ENCODE measurements at regions of chr7 and their contacts with region 1.

Region 1: GRCh38 chr7:54839538-54840213 is 80.7 kb upstream of the SEC61G start:
- DNase-seq: peak; percentile 78
- ATAC-seq: peak; percentile 74
- H3K4me3 ChIP-seq: no peak overlapping the region
- H3K27ac ChIP-seq: peak overlapping the region; percentile 96
- H3K4me1 ChIP-seq: peaks cover 69% of the 10 kb centered on the region
- H3K27me3 ChIP-seq: no peaks in the 10 kb centered on the region
- CTCF ChIP-seq: peak; percentile 90

Region 2: GRCh38 chr7:54825368-54825767 is 14.3 kb before region 1 on chr7:
- CTCF ChIA-PET with region 1: no interaction called
- POLR2A ChIA-PET with region 1: no interaction called
- intact Hi-C with region 1: loop called (anchors 1 kb)
- DNase-seq: no peak
- ATAC-seq: peak; percentile 54
- H3K4me3 ChIP-seq: peak overlapping the region; percentile 45; the same call in 1 of the 2 replicates
- H3K27ac ChIP-seq: peak overlapping the region; percentile 83
- H3K4me1 ChIP-seq: peaks cover 41% of the 10 kb centered on the region
- H3K27me3 ChIP-seq: no peaks in the 10 kb centered on the region
- CTCF ChIP-seq: no peak; the same call in 1 of the 2 replicates

Region 3: GRCh38 chr7:54858008-54858692 is 18.5 kb after region 1 on chr7:
- CTCF ChIA-PET with region 1: no interaction called
- POLR2A ChIA-PET with region 1: no interaction called
- intact Hi-C with region 1: no loop called
- DNase-seq: no peak
- ATAC-seq: no peak
- H3K4me3 ChIP-seq: no peak overlapping the region
- H3K27ac ChIP-seq: no peak overlapping the region
- H3K4me1 ChIP-seq: no peaks in the 10 kb centered on the region
- H3K27me3 ChIP-seq: no peaks in the 10 kb centered on the region
- CTCF ChIP-seq: no peak

Region 4: DNA sequence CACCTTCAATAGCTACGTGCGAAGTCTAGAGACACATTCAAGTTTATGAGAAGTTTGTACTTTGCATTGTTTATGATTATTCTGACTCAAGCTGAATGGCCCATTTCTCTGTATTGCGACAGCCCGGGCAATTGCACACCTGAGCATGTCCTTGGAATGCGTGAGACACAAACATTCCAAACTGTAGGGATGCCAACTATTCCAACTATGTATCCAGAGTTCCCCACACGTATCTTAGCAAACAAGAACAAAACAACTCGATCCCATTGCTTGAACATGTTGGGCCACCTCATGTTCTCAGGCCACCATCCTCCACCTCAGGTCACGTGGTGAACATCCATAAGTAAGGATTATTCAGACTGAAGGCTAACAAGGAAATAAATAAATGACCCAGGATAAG is 127.7 kb after region 1 on chr7:
- CTCF ChIA-PET with region 1: no interaction called
- POLR2A ChIA-PET with region 1: interaction called, 4 read pairs
- intact Hi-C with region 1: loop called (anchors 5 kb)
- DNase-seq: peak; percentile 98
- ATAC-seq: peak; percentile 72
- H3K4me3 ChIP-seq: no peak overlapping the region
- H3K27ac ChIP-seq: peak overlapping the region; percentile 84
- H3K4me1 ChIP-seq: peaks cover 55% of the 10 kb centered on the region
- H3K27me3 ChIP-seq: no peaks in the 10 kb centered on the region
- CTCF ChIP-seq: no peak

Region 5: DNA sequence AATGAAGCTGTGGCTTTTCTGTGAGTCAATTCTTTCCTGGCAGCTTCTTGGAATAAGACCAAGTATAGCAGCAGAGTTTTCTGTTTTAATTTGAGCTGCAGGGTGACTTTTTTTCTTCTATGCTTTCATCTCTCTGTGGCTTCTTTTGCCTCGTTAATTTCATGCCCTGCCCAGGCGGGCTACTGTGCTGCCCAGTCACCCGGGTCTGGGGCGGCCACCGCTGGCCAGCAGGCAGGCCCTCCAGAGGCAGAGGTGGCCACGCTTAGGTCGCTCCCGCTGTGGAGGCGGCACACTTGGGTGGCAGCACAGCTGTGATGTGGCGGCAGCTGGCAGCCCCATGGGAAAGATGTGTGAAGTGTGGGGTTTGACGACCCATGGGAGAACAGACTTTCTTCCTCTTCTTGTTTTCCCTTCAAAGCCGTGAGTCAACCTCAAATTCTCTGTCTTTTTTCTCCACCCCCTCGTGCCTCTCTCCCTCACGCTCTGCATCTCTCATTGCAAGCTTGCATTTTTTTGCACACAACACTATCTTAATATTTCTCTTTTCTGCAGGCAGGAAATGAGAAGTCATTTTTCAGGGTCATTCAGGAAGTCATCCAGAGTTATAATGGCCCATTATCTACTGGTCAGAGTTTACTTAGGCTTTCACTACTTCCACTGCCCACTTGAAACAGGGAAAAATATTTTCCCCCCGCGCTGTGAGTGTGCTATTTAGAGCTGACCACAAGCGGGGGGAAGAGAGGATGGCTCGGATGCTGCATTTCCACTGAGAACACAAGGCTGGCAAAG is 246.9 kb after region 1 on chr7:
- CTCF ChIA-PET with region 1: no interaction called
- POLR2A ChIA-PET with region 1: no interaction called
- intact Hi-C with region 1: loop called (anchors 5 kb)
- DNase-seq: peak; percentile 78
- ATAC-seq: peak; percentile 84
- H3K4me3 ChIP-seq: peak overlapping the region; percentile 63
- H3K27ac ChIP-seq: peak overlapping the region; percentile 99
- H3K4me1 ChIP-seq: peaks cover 44% of the 10 kb centered on the region
- H3K27me3 ChIP-seq: no peaks in the 10 kb centered on the region
- CTCF ChIP-seq: no peak

Region 6: DNA sequence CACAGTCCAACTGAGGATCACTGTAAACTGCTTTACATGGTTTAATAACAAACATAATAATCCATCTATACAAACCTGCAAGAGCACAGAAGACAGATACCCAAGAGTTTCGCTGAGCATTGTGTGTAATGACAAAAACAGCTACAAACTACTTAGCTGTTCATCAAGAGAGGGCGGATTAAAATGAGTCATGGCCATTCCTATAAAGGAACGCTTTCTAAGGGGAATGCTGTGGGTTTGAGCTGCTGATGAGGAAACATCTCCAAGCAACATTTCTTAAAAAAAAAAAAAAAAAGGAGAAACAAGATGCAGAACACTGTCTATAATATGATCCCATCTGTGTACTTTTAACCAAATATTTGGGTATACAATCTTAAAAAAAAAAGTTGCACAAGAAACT is 698.9 kb after region 1 on chr7:
- CTCF ChIA-PET with region 1: no interaction called
- POLR2A ChIA-PET with region 1: interaction called, 16 read pairs
- intact Hi-C with region 1: no loop called
- DNase-seq: peak; percentile 45
- ATAC-seq: peak; percentile 38; the same call in 1 of the 2 replicates
- H3K4me3 ChIP-seq: no peak overlapping the region
- H3K27ac ChIP-seq: no peak overlapping the region
- H3K4me1 ChIP-seq: peaks cover 19% of the 10 kb centered on the region
- H3K27me3 ChIP-seq: no peaks in the 10 kb centered on the region
- CTCF ChIP-seq: no peak

Measured in PC-3 (cell line).